MCF 10A (cell line): ENCODE measurements at regions of chr12 and their contacts with region 1.

Region 1: DNA sequence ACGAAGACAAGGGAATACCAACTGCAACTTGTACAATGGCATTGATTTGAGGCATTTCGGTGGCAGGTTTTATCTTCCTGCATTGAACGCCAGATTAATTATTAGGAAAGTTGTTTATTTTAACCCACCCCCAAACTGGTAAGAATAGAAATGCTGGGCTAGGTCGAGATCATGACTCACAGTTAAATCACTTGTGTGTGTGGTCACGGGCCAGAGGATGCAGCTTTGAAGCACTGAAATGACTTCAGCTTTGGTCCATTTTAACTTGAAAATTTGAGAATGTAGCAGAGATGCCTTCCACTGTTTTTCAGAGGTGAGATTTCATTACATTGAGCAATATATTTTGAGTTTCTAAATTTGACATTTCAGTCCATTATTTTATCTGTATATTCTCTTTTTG is 23.6 kb upstream of the KCNH3 start:
- DNase-seq: peak; percentile 69
- H3K4me3 Mint-ChIP-seq: no peak overlapping the region
- H3K27ac Mint-ChIP-seq: peak overlapping the region; percentile 49
- H3K4me1 Mint-ChIP-seq: peaks cover 15% of the 10 kb centered on the region
- H3K27me3 Mint-ChIP-seq: no peaks in the 10 kb centered on the region
- CTCF ChIP-seq: no peak

Region 2: GRCh38 chr12:49296034-49296835 is 219.0 kb before region 1 on chr12:
- CTCF ChIA-PET with region 1: interaction called, 11 read pairs
- POLR2A ChIA-PET with region 1: no interaction called
- intact Hi-C with region 1: no loop called
- DNase-seq: peak; percentile 45
- H3K4me3 Mint-ChIP-seq: peak overlapping the region; percentile 67
- H3K27ac Mint-ChIP-seq: no peak overlapping the region
- H3K4me1 Mint-ChIP-seq: peaks cover 6% of the 10 kb centered on the region
- H3K27me3 Mint-ChIP-seq: peaks cover 11% of the 10 kb centered on the region
- CTCF ChIP-seq: peak; percentile 92

Region 3: DNA sequence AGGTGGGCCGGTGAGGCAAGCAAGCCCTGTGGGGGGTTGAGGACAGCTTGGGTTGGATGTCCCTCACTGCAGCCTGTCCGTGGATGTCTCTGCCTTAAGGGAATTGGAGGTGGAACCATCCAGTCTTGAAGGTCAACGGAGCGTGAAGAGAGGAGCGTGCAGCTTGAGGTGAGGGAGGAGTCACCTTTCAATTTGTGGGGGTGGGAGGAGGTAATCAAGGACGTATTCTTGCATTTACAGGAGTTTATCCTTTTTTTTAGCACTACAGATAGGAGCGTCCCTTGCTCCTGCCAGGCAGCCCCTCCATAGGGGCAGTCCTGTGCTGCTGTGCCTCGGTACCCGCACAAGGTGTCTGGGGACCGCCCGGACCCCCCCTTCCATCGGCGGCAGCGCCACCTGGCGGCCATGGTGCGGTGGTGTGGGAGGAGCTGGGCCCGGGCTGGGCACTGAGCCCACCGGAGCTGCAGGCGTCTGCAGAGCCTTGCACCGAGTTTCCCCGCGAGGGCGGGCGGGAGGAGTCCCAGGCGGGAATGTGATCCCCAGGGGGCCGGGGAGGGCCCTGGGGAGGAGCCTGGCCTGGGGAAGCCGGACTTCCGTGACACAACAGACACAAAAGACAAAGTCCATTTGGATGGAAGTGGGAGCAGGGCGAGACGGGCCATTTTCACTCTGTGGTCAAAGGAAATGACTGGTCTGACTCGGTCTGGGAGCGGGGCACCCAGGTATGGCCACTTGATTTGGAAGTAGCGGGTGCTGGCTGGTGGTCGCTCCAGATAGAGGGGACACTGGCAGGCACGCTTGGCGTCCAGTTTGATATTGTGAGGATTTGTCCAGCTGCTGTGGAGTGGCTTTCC is 167.7 kb before region 1 on chr12:
- CTCF ChIA-PET with region 1: interaction called, 39 read pairs
- POLR2A ChIA-PET with region 1: no interaction called
- intact Hi-C with region 1: no loop called
- DNase-seq: peak; percentile 87
- H3K4me3 Mint-ChIP-seq: peak overlapping the region; percentile 68
- H3K27ac Mint-ChIP-seq: no peak overlapping the region
- H3K4me1 Mint-ChIP-seq: peaks cover 9% of the 10 kb centered on the region
- H3K27me3 Mint-ChIP-seq: peaks cover 29% of the 10 kb centered on the region
- CTCF ChIP-seq: peak; percentile 95

Region 4: DNA sequence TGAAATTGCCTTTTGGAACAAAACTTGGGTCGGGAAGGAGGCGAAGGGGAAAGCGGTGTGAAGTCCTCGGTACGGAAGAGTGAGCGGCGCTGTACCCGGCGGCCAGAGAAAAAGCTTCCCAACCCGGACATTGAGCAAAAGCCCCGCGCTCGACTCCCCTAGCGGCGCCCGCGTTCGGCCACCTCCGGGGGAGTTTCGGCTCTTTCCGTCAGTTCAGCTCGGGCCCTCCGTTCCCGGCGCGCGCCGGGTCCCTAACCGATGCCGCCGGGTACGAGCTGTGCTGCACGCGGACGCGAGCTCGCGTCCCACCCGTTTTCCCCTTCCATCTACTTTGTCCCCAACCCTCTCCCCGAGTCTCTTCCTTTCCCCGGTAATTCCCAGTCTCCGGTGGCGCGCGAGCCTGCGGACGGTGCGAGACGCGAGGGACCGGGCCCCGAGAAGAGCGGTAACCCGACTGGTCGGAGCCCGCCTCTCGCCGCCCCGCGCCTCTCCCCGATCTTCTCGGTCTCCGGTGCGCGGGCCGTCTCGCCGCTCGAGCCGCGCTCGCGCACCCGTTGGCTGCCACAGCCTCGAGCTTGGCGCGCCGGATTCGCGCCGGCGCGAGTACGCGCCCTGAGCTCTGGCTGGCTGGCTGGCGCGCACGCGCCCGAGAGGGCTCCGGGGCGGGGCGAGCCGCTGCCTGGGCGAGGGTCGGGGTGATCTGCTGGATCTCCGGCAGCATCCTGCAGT is 148.4 kb before region 1 on chr12:
- CTCF ChIA-PET with region 1: interaction called, 21 read pairs
- POLR2A ChIA-PET with region 1: interaction called, 27 read pairs
- intact Hi-C with region 1: no loop called
- DNase-seq: peak; percentile 89
- H3K4me3 Mint-ChIP-seq: peak overlapping the region; percentile 80
- H3K27ac Mint-ChIP-seq: peak overlapping the region; percentile 33
- H3K4me1 Mint-ChIP-seq: peaks cover 24% of the 10 kb centered on the region
- H3K27me3 Mint-ChIP-seq: no peaks in the 10 kb centered on the region
- CTCF ChIP-seq: peak; percentile 6

Region 5: DNA sequence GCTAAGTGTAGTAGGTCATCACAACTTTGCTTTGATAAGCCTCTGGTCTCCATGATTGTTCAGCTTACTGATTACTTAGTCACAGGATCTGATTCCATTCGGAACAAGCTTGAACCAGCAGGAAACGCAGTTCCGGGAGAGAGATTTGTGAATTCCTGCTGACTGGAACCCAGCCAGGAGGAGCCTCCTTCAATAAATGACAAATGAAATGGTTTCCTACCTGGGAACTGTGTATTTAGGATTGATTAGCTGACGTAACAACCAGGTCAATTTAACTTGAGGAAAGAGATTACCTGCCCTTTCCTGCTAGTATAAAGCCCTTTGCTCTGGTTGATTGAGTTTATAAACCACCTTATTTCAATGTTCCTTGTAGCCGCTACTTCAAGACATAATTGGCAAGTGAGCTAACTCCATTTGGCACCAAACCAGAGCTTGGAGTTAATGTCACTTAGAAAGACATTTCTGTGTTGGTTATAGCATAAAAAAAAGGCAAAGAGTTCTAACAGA is 11.5 kb before region 1 on chr12:
- CTCF ChIA-PET with region 1: interaction called, 23 read pairs
- POLR2A ChIA-PET with region 1: interaction called, 4 read pairs
- intact Hi-C with region 1: no loop called
- DNase-seq: peak; percentile 69
- H3K4me3 Mint-ChIP-seq: peak overlapping the region; percentile 40
- H3K27ac Mint-ChIP-seq: peak overlapping the region; percentile 54
- H3K4me1 Mint-ChIP-seq: peaks cover 15% of the 10 kb centered on the region
- H3K27me3 Mint-ChIP-seq: no peaks in the 10 kb centered on the region
- CTCF ChIP-seq: no peak

Region 6: DNA sequence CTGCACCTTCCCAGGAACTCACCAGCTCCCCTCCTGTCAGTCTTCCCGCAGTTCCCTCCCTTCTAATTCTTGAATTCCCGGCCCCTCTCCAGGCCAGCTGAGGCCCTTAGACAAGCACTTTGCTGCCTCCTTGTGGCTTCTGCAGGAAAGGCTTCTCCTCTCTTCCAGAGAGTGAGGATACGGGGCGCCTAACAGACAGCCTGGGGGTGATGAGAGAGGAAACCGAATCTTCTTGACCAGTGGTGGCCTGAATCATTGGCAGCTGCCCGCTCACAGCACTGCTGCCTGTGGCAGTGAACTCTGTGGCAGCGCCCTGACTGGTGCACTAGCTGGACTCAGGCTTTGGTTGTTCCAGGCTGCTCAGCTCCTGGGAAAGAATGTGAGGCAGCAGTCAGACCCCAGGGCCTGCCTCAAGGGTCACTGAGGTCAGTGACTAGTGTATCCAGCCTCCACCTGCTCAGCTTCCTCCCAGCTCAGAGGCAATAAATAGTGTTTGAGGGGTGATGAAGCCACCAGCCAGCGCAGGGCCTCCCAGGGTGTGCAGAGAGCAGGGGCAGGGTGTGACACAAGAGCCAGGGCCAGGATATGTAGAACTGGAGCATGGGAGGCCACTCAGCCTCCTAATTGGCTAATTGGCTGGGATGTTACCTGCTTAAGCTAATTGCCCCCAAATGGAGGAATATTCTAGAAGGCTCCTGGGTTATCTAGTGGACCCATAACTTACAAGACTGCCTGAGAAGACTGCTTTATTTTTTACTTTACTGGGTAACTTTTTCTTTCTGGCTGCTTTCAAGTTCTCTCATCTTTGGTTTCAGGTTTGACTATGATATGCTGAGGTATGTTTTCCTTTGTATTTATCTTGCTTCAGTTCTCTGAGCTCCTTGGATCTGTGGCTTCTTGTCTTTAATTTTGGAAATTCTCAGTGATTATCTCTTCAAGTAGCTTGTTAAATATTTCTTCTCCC is 65.6 kb after region 1 on chr12:
- CTCF ChIA-PET with region 1: interaction called, 7 read pairs
- POLR2A ChIA-PET with region 1: interaction called, 4 read pairs
- intact Hi-C with region 1: loop called (anchors 2 kb)
- DNase-seq: peak; percentile 86
- H3K4me3 Mint-ChIP-seq: no peak overlapping the region
- H3K27ac Mint-ChIP-seq: no peak overlapping the region
- H3K4me1 Mint-ChIP-seq: peaks cover 6% of the 10 kb centered on the region
- H3K27me3 Mint-ChIP-seq: no peaks in the 10 kb centered on the region
- CTCF ChIP-seq: peak; percentile 75

Region 7: DNA sequence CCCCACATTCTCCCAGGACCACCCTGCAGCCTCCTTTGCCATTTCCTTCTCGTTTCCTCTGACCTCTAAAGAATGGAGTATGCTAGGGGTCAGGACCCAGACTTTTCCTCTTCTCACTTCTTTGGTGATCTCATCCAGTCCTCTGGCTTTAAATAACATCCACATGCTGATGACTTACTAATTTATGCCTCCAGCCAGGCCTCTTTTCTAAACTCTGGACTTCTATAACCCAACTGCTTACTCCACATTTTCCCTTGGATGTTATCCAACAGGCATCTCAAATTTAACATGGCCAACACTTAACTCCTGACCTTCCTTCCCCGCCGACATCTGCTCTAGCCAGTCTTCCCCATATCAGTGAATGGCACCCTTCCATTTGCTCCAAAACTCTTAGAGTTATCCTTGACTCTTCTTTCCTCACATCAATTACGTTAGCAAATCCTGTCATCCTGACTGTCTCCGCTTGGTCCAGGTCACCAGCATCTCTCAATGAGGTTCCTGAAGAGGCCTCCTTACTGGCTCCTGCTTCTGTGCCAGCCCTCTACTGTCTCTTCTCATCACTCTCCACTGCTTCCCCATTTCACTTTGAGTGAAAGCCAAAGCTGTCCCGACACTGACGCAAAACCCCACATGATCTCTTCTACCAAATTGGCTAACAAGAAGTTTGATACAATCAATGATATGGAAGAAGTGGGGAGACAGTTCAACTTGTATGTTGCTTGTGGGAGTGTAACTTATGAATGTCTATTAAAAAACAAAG is 268.8 kb after region 1 on chr12:
- CTCF ChIA-PET with region 1: no interaction called
- POLR2A ChIA-PET with region 1: no interaction called
- intact Hi-C with region 1: no loop called
- DNase-seq: no peak
- H3K4me3 Mint-ChIP-seq: no peak overlapping the region
- H3K27ac Mint-ChIP-seq: no peak overlapping the region
- H3K4me1 Mint-ChIP-seq: no peaks in the 10 kb centered on the region
- H3K27me3 Mint-ChIP-seq: peaks cover 36% of the 10 kb centered on the region
- CTCF ChIP-seq: no peak